H1 (cell line): ENCODE measurements at regions of chr1 and their contacts with region 1.

Region 1: GRCh38 chr1:182143154-182143657 is 81.7 kb upstream of the ZNF648 start:
- DNase-seq: peak; percentile 67 to 97
- H3K4me3 ChIP-seq: no peak overlapping the region
- H3K27ac ChIP-seq: no peak overlapping the region
- H3K4me1 ChIP-seq: peaks cover 0 to 8% (median 6%) of the 10 kb centered on the region in 4 experiments; a peak in 5 of 7 replicates
- H3K27me3 ChIP-seq: no peaks in the 10 kb centered on the region
- CTCF ChIP-seq: peak; percentile 84 to 96 (median 92)
- EP300 ChIP-seq: no peak
- POLR2A ChIP-seq: no peak
- RAD21 ChIP-seq: peak; percentile 89 to 96

Region 2: DNA sequence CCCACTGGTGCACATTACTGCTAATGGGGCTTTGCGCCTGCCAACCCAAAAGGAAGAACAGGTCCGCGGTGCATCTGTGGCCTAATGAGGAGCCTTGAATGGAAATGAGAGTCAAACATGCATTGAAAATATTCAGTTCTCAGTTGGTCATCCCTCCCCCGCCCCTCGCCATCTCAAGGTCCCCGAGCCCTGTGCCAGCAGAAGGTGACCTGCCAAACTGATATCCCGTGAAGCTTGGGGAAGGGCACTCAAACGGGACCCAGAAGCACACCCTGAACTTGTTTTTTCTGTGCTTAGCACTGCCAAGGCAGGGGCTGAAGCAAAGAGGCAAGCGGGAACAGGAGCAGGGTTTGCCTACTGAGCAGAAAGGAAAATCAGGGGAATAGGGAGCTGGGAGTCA is 13.8 kb before region 1 on chr1:
- CTCF ChIA-PET with region 1: interaction called, 69 read pairs
- POLR2A ChIA-PET with region 1: no interaction called
- DNase-seq: no peak
- H3K4me3 ChIP-seq: no peak overlapping the region
- H3K27ac ChIP-seq: no peak overlapping the region
- H3K4me1 ChIP-seq: peaks cover 0 to 4% (median under 1%) of the 10 kb centered on the region in 4 experiments; a peak in 1 of 7 replicates
- H3K27me3 ChIP-seq: no peaks in the 10 kb centered on the region; a peak in 1 of 7 replicates
- CTCF ChIP-seq: no peak
- EP300 ChIP-seq: no peak
- POLR2A ChIP-seq: no peak
- RAD21 ChIP-seq: no peak

Region 3: GRCh38 chr1:182189535-182190066 is 46.4 kb after region 1 on chr1:
- CTCF ChIA-PET with region 1: interaction called, 50 read pairs
- POLR2A ChIA-PET with region 1: interaction called, 3 read pairs
- DNase-seq: no peak
- H3K4me3 ChIP-seq: no peak overlapping the region
- H3K27ac ChIP-seq: no peak overlapping the region
- H3K4me1 ChIP-seq: no peaks in the 10 kb centered on the region
- H3K27me3 ChIP-seq: no peaks in the 10 kb centered on the region
- CTCF ChIP-seq: no peak
- EP300 ChIP-seq: no peak
- POLR2A ChIP-seq: no peak
- RAD21 ChIP-seq: no peak

Region 4: DNA sequence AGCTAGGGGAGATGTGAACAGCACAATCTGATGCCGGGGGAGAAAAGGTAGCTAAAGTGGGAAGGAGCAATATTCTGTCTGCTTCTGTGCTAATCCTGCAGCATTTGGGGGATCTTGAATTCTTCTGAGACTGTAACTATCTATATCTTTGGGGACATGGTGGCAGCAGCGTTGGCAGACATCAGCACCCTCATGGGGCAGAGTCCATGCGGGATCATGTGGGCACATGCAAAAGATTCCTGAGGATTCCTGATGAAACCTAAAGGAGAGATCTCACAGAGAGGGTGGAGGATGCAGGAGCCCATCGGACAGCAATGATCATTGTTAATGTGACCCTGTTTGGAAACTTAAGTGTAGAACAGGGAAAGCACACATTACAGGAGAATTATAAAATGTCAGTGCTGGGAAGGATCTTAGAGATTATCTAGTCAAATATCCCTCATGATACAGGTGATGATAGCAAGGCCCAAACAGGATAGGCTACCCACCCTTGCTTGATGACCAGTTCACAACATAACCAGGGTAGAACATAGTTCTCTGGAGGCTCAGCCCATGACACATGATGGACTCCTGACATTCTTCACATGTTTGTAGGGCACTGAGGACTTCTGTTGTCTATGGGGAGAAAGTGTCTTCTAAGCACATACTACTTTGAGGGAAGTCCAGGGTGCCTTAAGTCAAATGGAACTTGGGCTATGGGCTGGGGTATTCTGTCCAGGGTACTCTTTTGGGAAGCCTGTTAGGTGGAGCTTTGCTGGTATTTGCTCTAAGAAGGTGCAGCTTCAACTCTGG is 99.2 kb after region 1 on chr1:
- CTCF ChIA-PET with region 1: interaction called, 11 read pairs
- POLR2A ChIA-PET with region 1: no interaction called
- DNase-seq: no peak
- H3K4me3 ChIP-seq: no peak overlapping the region
- H3K27ac ChIP-seq: no peak overlapping the region
- H3K4me1 ChIP-seq: no peaks in the 10 kb centered on the region
- H3K27me3 ChIP-seq: no peaks in the 10 kb centered on the region
- CTCF ChIP-seq: no peak
- EP300 ChIP-seq: no peak
- POLR2A ChIP-seq: no peak
- RAD21 ChIP-seq: no peak

Region 5: GRCh38 chr1:182381962-182382819 is 239.0 kb after region 1 on chr1:
- CTCF ChIA-PET with region 1: interaction called, 17 read pairs
- POLR2A ChIA-PET with region 1: interaction called, 4 read pairs
- DNase-seq: no peak
- H3K4me3 ChIP-seq: no peak overlapping the region
- H3K27ac ChIP-seq: no peak overlapping the region
- H3K4me1 ChIP-seq: no peaks in the 10 kb centered on the region
- H3K27me3 ChIP-seq: no peaks in the 10 kb centered on the region
- CTCF ChIP-seq: no peak
- EP300 ChIP-seq: no peak
- POLR2A ChIP-seq: peak in 1 of 2 experiments; percentile 72; a peak in 2 of 3 replicates
- RAD21 ChIP-seq: no peak

Region 6: DNA sequence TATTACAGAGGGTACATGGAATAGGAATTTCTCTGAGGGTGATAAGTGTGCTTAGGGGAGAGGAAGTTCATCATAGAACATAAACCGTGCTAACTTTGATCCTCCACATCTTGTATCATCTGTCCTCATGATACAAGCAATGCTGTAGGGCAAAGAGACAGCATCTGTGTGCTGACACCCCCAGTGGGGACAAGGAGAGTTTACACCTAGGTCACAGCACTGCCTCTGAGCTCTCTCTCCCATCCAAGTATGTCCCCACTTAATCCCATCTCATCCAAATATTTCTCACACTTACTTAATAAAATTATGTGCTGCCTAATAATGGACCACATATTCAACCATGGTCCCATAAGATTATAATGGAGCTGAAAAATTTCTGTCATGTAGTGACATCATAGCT is 261.6 kb after region 1 on chr1:
- CTCF ChIA-PET with region 1: interaction called, 107 read pairs
- POLR2A ChIA-PET with region 1: no interaction called
- DNase-seq: no peak
- H3K4me3 ChIP-seq: no peak overlapping the region
- H3K27ac ChIP-seq: no peak overlapping the region
- H3K4me1 ChIP-seq: peaks cover 0 to 5% (median 0%) of the 10 kb centered on the region in 4 experiments; a peak in 1 of 7 replicates
- H3K27me3 ChIP-seq: no peaks in the 10 kb centered on the region
- CTCF ChIP-seq: peak; percentile 25 to 65 (median 42); a peak in 3 of 4 replicates
- EP300 ChIP-seq: no peak
- POLR2A ChIP-seq: no peak
- RAD21 ChIP-seq: peak; percentile 36 to 43; a peak in 3 of 4 replicates